ENCODE measurements at regions of chr18 and their contacts with region 1.

Region 1: DNA sequence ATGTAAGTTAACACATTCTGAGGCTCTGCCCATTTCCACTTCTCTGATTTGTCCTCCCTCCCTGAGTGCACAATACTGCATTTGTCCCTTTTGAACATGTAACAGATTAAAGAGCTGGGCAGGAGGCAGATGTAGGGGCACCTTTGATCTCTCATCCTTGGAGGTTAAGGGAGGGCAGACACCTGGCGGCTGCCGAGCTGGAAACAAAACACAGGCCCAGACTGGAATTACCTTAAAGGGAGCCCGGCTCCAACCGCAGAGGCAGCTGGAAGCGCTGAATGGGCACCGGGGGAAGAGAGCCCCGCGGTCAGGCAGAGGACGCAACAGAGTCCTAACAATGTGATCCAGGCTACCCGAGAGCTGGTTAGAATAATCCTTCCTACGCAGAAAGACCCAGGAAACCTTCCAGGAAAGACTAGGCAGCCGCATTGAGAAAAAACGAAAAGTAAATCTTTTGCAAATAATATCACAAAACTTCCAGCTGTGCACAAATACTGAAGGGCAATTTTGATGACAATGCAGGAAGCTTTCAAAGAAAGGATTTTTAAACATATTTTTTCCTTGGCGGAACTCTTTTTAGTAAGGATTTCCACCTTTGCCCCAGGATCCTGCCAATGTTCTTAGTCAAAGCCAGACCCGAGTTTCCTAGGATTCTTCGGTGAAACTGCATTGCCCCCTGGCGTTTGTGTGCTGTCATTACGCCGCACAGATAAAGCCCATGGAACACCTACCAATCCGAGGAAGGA is 216.0 kb downstream of the TGIF1 start:
- DNase-seq: peak; percentile 86 to 94 (median 88)
- ATAC-seq: peak; percentile 82
- H3K4me3 ChIP-seq: no peak overlapping the region
- H3K27ac ChIP-seq: peak overlapping the region; percentile 73
- H3K4me1 ChIP-seq: peaks cover 20 to 39% of the 10 kb centered on the region in 2 experiments
- H3K27me3 ChIP-seq: no peaks in the 10 kb centered on the region
- CTCF ChIP-seq: peak; percentile 91 to 98 (median 98)
- EP300 ChIP-seq: peak; percentile 52; the same call in 1 of the 2 replicates
- POLR2A ChIP-seq: no peak
- RAD21 ChIP-seq: peak; percentile 100

Region 2: DNA sequence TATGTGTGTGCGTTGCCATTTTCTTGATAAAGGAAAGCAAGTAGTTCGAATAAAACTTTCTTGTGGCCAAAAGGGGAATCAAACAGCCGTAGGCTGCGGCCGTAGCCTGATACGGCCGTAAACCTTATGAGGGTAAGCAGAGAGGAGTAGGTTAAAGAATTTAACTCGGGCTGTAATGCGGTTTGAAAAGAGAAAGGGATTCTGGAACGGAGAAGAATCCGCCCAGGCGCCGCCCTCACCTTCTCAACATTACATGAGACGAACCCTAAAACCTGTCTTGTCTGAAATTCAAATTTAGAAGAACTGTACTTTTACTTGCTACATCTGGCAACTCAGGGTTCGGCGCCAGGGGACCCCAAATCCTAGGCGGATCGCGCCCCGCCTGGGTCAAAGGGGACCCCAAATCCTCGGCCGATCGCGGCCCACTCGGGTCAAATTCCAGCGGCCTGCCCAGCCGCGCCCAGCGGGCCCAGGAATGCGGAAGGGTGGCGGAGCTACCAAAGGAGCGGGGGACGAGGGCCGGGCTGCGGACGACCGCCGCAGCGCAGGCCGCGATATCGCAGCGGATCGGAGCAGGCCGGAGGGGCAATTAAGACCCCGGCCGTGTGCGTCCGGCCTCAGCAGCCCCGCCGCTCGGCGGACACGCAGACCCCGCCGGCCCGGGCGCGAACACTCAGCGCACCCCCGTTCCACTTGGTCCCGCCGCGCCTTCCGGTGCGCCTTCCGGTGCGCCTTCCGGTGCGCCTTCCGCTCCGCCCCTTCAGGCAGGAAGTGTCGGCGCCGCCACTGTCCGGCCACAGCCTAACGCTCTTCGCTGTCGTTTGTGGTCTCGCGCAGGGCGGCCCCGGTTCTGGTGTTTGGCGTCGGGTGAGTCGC is 404.3 kb before region 1 on chr18 and contains the start of gene MYL12B:
- CTCF ChIA-PET with region 1: no interaction called
- POLR2A ChIA-PET with region 1: interaction called, 3 read pairs
- in situ Hi-C with region 1: no loop called
- intact Hi-C with region 1: loop called (anchors 5 kb)
- DNase-seq: peak; percentile 79 to 92 (median 83)
- ATAC-seq: peak; percentile 85
- H3K4me3 ChIP-seq: peak within 1 kb of the TSS; percentile 84
- H3K27ac ChIP-seq: peak within 1 kb of the TSS; percentile 97
- H3K4me1 ChIP-seq: peaks cover 25 to 42% of the 10 kb centered on the region in 2 experiments
- H3K27me3 ChIP-seq: no peaks in the 10 kb centered on the region
- CTCF ChIP-seq: peak in 1 of 3 experiments; percentile 19; a peak in 1 of 6 replicates
- EP300 ChIP-seq: no peak
- POLR2A ChIP-seq: peak; percentile 85
- RAD21 ChIP-seq: no peak
- polyA plus RNA-seq, gene MYL12B: 913 to 995 TPM

Region 3: GRCh38 chr18:3411854-3412268 is 254.1 kb before region 1 on chr18:
- CTCF ChIA-PET with region 1: no interaction called
- POLR2A ChIA-PET with region 1: no interaction called
- in situ Hi-C with region 1: no loop called
- intact Hi-C with region 1: no loop called
- DNase-seq: no peak
- ATAC-seq: no peak
- H3K4me3 ChIP-seq: no peak overlapping the region
- H3K27ac ChIP-seq: no peak overlapping the region
- H3K4me1 ChIP-seq: peaks cover 3 to 6% of the 10 kb centered on the region in 2 experiments; a peak in 2 of 5 replicates
- H3K27me3 ChIP-seq: no peaks in the 10 kb centered on the region
- CTCF ChIP-seq: no peak
- EP300 ChIP-seq: no peak
- POLR2A ChIP-seq: no peak
- RAD21 ChIP-seq: no peak

Region 4: DNA sequence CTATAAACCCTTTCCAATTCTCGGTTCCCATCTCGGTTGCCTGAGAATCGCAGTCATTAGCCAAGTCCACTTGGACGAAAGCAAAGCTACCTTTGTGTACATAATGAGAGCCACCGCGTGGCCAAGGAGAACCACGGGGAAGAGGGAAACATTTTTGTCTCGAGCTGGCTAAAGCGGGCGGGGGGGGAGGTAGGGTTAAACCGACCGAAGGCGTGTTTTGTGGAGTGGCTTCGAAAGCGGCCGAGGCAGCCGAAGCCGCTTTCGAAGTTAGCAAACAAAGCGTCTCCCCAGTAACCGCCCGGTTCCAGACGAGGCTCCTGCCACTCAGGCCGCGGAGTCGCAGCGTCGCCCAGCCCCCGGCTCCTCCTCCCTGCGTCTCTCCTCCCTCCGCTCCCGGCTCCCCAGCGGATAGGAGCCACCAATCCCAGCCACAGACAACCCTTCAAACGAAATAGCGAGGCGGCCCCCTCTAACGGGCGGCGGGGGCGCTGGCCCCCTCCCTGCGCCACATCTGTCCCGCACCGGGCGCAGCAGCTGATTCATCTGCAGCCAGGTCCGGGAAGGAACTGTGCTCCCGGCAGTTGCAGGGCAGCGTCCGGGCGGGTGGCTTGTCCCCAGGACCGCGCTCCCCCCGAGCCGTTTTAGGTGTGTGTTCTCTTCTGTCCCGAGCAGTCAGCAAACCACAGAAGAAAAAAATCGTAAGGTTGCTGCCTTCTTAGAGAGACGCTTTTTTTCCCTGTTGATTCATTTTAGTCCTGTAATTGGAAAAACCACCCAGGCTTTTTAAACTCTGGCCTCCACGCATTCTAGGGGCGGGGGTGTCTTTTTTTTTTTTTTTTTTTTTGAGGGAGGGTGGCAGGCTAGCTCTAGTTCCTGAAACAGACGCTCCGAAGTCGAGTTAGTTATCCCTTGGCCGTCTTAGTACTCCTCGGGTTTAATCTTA is 217.8 kb before region 1 on chr18:
- CTCF ChIA-PET with region 1: no interaction called
- POLR2A ChIA-PET with region 1: interaction called, 29 read pairs
- in situ Hi-C with region 1: loop called (anchors 5 kb)
- intact Hi-C with region 1: loop called (anchors 2 kb)
- DNase-seq: peak; percentile 85 to 99 (median 89)
- ATAC-seq: peak; percentile 78
- H3K4me3 ChIP-seq: peak overlapping the region; percentile 87
- H3K27ac ChIP-seq: peak overlapping the region; percentile 98
- H3K4me1 ChIP-seq: peaks cover 31 to 51% of the 10 kb centered on the region in 2 experiments
- H3K27me3 ChIP-seq: no peaks in the 10 kb centered on the region
- CTCF ChIP-seq: peak in 2 of 3 experiments; percentile 31 to 49; a peak in 2 of 6 replicates
- EP300 ChIP-seq: peak; percentile 81
- POLR2A ChIP-seq: no peak
- RAD21 ChIP-seq: peak in 1 of 2 experiments; percentile 33; a peak in 3 of 4 replicates

Region 5: GRCh38 chr18:3481696-3482210 is 184.2 kb before region 1 on chr18:
- CTCF ChIA-PET with region 1: no interaction called
- POLR2A ChIA-PET with region 1: no interaction called
- in situ Hi-C with region 1: no loop called
- intact Hi-C with region 1: loop called (anchors 1 kb)
- DNase-seq: peak; percentile 59 to 76 (median 70)
- ATAC-seq: peak; percentile 97
- H3K4me3 ChIP-seq: no peak overlapping the region
- H3K27ac ChIP-seq: no peak overlapping the region
- H3K4me1 ChIP-seq: peaks cover 0 to 11% of the 10 kb centered on the region in 2 experiments; a peak in 4 of 5 replicates
- H3K27me3 ChIP-seq: no peaks in the 10 kb centered on the region
- CTCF ChIP-seq: peak; percentile 70 to 87 (median 84)
- EP300 ChIP-seq: no peak
- POLR2A ChIP-seq: no peak
- RAD21 ChIP-seq: peak; percentile 47 to 69

Region 6: GRCh38 chr18:3593904-3594661 is 71.9 kb before region 1 on chr18:
- CTCF ChIA-PET with region 1: interaction called, 16 read pairs
- POLR2A ChIA-PET with region 1: interaction called, 109 read pairs
- in situ Hi-C with region 1: no loop called
- intact Hi-C with region 1: loop called (anchors 1 kb)
- DNase-seq: peak; percentile 82 to 97 (median 86)
- ATAC-seq: peak; percentile 61
- H3K4me3 ChIP-seq: peak overlapping the region; percentile 42
- H3K27ac ChIP-seq: peak overlapping the region; percentile 94
- H3K4me1 ChIP-seq: peaks cover 44 to 60% of the 10 kb centered on the region in 2 experiments
- H3K27me3 ChIP-seq: no peaks in the 10 kb centered on the region
- CTCF ChIP-seq: peak; percentile 87 to 94 (median 90)
- EP300 ChIP-seq: peak; percentile 70
- POLR2A ChIP-seq: no peak
- RAD21 ChIP-seq: peak; percentile 48 to 66

Region 7: DNA sequence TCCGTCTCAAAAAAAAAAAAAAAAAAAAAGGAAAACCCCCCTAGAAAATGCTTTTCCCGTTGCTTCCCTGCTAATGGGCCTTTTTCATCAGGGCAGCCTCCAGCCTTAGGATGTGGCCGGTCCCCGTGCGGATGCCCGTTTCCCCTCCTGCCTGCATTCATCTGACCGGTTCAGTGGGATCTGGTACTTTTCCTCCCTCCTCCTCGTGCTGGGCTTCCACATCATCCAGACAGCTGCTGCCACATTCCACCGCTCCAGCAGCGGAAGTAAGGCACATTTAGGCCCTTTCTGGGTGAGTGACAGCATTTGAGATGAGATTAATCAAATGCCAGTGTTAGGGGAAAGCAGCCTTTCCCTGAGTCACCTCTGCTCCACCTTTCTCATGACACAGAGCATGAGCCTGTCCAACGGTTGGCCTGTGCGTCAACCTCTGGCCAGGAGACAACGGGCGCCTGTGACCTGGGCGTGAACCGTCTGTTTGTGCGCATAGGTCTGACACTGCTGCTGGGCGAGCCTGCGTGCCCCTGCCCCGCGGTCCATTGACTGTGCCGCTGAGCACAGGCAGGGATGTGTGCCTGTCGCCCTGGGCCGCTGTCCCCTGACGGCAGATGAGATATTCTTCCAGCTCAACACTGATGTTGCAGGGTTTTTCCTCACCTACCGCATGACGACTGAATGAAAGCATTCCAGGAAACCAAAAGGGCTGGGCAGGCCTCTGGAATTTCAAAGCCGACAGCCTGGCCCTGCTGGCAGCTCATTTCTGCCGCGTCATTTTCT is 42.0 kb before region 1 on chr18:
- CTCF ChIA-PET with region 1: no interaction called
- POLR2A ChIA-PET with region 1: interaction called, 12 read pairs
- in situ Hi-C with region 1: no loop called
- intact Hi-C with region 1: loop called (anchors 1 kb)
- DNase-seq: peak; percentile 83 to 97 (median 85)
- ATAC-seq: peak; percentile 86
- H3K4me3 ChIP-seq: peak overlapping the region; percentile 26
- H3K27ac ChIP-seq: peak overlapping the region; percentile 98
- H3K4me1 ChIP-seq: peaks cover 59 to 66% of the 10 kb centered on the region in 2 experiments
- H3K27me3 ChIP-seq: no peaks in the 10 kb centered on the region
- CTCF ChIP-seq: no peak; a peak in 1 of 6 replicates
- EP300 ChIP-seq: peak; percentile 81
- POLR2A ChIP-seq: peak; percentile 92
- RAD21 ChIP-seq: no peak; a peak in 2 of 4 replicates

Region 8: DNA sequence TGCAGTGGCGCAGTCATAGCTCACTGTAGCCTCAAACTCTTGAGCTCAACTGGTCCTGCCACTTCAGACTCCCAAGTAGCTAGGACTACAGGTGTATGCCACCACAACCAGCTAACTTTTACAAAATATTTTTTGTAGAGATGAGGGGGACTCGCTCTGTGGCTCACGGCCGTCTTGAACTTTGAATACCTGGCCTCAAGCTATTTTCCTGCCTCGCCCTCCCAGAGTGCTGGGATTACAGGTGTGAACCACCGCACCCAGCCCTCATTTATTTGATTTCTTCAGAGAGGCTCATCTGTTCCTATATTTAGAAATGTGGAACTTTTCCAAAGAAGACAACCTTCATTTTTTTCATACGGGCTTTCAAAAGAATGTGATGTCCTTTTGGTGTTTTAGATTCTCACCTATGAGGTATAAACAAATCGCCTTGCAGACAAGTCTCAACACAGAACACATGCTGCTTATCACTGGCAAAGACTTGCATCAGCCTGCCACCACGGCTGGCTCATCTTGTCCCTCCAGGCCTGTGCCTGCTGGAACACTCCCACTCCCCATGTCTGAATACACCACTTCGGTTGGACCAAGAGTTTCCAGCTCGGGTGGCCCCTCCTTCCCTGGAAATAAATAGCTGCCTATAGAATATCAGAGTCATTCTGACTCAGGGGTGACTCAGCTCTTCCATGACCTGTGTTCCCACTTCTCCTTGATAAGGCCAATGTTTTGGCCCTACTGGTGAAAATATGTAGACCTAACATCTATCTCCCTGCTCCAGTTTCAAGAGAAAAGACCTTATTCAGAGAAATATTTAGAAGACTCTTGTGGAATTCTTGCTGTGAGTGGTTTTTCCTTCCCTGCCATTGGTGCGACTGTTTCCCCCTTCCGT is 13.3 kb before region 1 on chr18:
- CTCF ChIA-PET with region 1: interaction called, 5 read pairs
- POLR2A ChIA-PET with region 1: interaction called, 43 read pairs
- in situ Hi-C with region 1: no loop called
- intact Hi-C with region 1: loop called (anchors 1 kb)
- DNase-seq: peak; percentile 97 to 100 (median 98)
- ATAC-seq: peak; percentile 86
- H3K4me3 ChIP-seq: peak overlapping the region; percentile 43
- H3K27ac ChIP-seq: peak overlapping the region; percentile 83
- H3K4me1 ChIP-seq: peaks cover 57 to 64% of the 10 kb centered on the region in 2 experiments
- H3K27me3 ChIP-seq: no peaks in the 10 kb centered on the region; a peak in 1 of 5 replicates
- CTCF ChIP-seq: peak in 2 of 3 experiments; percentile 9 to 43; a peak in 3 of 6 replicates
- EP300 ChIP-seq: peak; percentile 99
- POLR2A ChIP-seq: no peak
- RAD21 ChIP-seq: peak in 1 of 2 experiments; percentile 29; a peak in 3 of 4 replicates

Measured in K562 (cell line).